Psoas muscle (tissue), 8 donors: ENCODE measurements at regions of chr5 and their contacts with region 1.

Region 1: GRCh38 chr5:10761166-10761932 is at the start of gene DAP:
- DNase-seq: peak; percentile 86 to 88
- ATAC-seq: peak; percentile 81 to 93 (median 91)
- H3K4me3 ChIP-seq: peak within 1 kb of the TSS; percentile 77
- H3K27ac ChIP-seq: peak within 1 kb of the TSS; percentile 82
- H3K4me1 ChIP-seq: peaks cover 9% of the 10 kb centered on the region
- H3K27me3 ChIP-seq: peaks cover 0 to 5% (median 0%) of the 10 kb centered on the region in 3 donors
- CTCF ChIP-seq: no peak
- total RNA-seq, gene DAP: 3.6 to 8.1 (median 6.6) TPM

Region 2: GRCh38 chr5:10452768-10453331 is 308.5 kb before region 1 on chr5:
- intact Hi-C with region 1: loop called in 1 of 2 experiments (anchors 10 kb)
- DNase-seq: no peak
- ATAC-seq: peak; percentile 80 to 88 (median 86)
- H3K4me3 ChIP-seq: no peak overlapping the region
- H3K27ac ChIP-seq: no peak overlapping the region
- H3K4me1 ChIP-seq: no peaks in the 10 kb centered on the region
- H3K27me3 ChIP-seq: no peaks in the 10 kb centered on the region
- CTCF ChIP-seq: peak; percentile 73